CD14-positive monocyte (primary cell): ENCODE measurements at regions of chr17 and their contacts with region 1.

Region 1: DNA sequence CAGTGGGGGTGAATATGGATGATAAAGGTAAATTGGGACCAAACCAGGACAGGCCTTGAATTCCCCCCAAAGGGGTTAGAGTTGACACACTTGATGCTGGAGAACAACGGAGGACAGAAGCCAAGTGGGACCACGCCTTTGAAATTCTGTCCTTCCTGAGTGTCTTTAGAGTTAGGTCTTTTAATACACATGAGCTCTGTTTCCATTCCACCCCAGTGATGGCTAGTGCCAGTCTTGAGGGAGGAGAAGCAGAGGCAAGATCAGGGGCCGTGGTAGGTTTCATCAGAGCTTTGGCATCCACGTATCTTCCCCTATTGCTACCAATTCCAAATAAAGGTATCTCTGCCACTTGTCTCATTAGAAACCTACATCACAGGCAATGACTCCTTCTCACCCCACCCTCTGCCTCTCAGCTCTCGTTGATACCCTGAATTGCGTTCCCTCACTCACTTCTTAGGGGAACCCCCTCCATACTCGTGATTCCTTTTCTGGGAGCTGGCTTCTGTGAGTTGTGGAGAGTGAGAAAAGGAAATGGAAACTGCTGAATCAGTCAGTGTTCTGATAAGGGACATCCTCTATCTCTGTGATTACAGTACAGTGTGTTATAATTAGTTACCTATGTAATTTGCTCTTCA is 2.4 kb upstream of the CCL3L1 start:
- DNase-seq: peak; percentile 87 to 98 (median 96)
- H3K4me3 ChIP-seq: peak overlapping the region in 1 of 3 experiments; percentile 9
- H3K4me3 Mint-ChIP-seq: peak overlapping the region; percentile 5 to 72
- H3K27ac ChIP-seq: peak overlapping the region; percentile 42 to 49
- H3K27ac Mint-ChIP-seq: peak overlapping the region; percentile 88 to 94 (median 90)
- H3K4me1 ChIP-seq: peaks cover 87 to 91% of the 10 kb centered on the region in 2 donors
- H3K4me1 Mint-ChIP-seq: peaks cover 85% of the 10 kb centered on the region
- H3K27me3 ChIP-seq: no peaks in the 10 kb centered on the region
- H3K27me3 Mint-ChIP-seq: peaks cover 1 to 9% (median 3%) of the 10 kb centered on the region in 3 donors
- CTCF ChIP-seq: no peak

Region 2: DNA sequence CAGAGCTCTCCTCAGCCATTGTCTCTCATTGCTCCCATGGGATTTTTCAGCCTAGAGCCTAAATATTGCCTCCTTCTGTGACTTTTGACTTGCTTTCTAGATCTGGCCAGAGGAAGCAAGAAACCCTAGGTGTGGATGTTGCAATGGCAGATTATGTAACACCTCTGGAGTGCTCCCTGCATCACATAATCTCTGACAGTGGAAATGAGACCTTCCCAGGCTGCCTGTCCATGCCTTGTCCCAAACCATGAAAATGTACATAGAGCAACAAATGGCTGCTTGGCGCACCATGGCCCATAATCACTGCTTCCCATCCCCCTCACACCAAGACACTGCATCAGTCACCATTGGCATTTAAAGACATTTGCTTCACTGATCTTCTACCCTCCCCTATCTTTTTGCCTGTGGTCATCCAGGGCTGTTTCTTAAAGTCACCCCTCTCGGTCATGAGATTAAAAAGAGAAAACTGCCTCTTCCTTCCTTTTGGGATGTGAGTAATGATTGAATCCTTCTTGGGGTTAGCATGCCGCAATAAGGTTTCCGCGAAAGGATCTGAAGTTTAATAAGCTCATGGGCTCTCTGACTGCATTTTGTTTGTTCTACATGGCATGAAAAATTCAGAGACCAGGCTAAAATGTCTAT is 1978.1 kb before region 1 on chr17:
- intact Hi-C with region 1: loop called in 1 of 2 experiments (anchors 10 kb)
- DNase-seq: peak; percentile 66 to 86 (median 82)
- H3K4me3 ChIP-seq: peak overlapping the region in 1 of 3 experiments; percentile 26
- H3K4me3 Mint-ChIP-seq: peak overlapping the region; percentile 4 to 47
- H3K27ac ChIP-seq: peak overlapping the region; percentile 35 to 60
- H3K27ac Mint-ChIP-seq: peak overlapping the region; percentile 25 to 95 (median 91)
- H3K4me1 ChIP-seq: peaks cover 60 to 61% of the 10 kb centered on the region in 2 donors
- H3K4me1 Mint-ChIP-seq: peaks cover 66% of the 10 kb centered on the region
- H3K27me3 ChIP-seq: no peaks in the 10 kb centered on the region
- H3K27me3 Mint-ChIP-seq: peaks cover 0 to 3% (median 3%) of the 10 kb centered on the region in 3 donors
- CTCF ChIP-seq: no peak

Region 3: DNA sequence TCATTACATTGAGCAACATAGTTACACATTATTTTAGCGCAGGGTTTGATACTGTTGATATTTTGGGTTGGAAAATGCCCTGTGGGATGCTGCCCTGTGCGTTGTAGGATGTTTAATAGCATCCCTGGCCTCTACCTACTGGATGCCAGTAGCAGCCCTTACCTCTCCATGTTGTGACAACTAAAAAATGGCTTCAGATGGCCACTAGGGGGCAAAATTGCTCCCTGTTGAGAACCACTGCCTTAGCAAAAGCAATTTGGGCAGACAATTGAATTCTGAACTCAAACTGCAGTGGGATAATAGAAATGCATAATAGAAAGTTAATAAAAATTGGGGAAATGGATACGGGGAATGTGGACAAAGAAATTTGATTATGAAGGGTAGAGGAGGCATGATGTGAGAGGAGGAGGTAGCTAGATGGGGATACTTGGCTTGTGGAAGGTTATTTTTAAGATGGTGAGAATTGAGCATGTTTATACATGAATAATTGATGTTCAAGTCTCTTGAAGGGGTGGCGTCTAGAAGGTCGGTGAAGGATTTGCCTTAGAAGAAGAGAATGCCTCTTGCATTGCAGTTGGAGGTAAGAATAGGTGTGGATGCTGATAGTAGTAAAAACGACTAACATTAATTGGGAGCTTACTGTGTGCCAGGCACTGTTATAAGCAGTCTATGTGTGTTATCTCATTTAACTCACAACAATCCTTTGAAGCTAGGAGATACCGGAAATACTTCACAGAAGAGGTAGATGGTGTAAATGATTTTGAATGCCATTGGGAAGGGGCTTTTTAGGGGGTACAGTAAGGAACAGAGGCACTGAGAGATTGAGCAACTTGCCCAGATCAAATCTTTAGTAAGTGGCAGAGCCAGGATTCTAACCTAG is 349.2 kb before region 1 on chr17:
- intact Hi-C with region 1: no loop called
- DNase-seq: peak; percentile 17 to 53 (median 45)
- H3K4me3 ChIP-seq: no peak overlapping the region
- H3K4me3 Mint-ChIP-seq: no peak overlapping the region
- H3K27ac ChIP-seq: no peak overlapping the region
- H3K27ac Mint-ChIP-seq: peak overlapping the region in 1 of 7 donors; percentile 0
- H3K4me1 ChIP-seq: no peaks in the 10 kb centered on the region
- H3K4me1 Mint-ChIP-seq: no peaks in the 10 kb centered on the region
- H3K27me3 ChIP-seq: no peaks in the 10 kb centered on the region
- H3K27me3 Mint-ChIP-seq: peaks cover 0 to 1% (median 0%) of the 10 kb centered on the region in 3 donors
- CTCF ChIP-seq: peak; percentile 86

Region 4: DNA sequence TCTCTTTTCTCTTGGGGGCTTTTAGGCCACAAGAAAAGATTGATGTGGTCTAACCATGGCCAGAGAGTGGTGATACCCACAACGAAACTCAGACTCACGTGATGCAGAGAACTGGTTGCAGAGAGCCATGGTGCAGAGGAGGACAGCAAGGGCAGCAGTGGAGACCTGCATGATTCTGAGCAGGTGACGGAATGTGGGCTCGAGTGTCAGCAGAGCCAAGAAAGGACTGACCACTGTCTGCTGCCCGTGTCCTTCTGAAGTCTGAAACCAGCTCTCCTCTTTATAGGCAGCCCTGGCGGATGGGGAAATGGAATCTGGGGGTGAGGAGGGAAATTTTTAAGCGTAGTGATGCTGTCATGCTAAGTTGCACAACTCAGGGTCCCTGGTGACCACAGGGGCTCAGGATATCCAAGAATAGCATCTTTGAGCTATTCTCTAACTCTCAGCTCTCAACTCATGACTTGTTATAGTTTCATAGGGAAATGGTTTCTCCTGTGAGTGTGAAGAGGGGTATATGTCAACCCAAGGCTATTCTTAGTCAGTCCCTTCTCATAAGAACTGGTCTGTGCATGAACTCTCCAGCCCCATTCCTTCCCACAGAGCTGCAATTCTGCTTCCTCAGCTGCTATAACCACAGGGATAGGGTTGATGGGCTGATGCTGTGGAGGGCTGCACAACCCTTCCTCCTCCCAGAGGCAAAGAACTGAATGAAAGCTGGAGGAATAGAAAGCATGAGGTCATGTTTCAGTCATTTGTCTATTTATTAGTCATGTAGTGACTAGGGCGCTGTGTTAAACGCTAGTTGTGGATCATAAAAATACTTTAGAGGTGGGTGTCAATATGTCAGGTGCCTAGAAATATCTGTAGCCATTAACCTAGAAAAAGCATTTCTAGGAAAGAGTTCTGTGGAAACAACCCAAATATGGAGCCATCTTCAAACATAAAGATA is 108.8 kb before region 1 on chr17 and contains the start of gene CCL3:
- intact Hi-C with region 1: loop called in 1 of 2 experiments (anchors 10 kb)
- DNase-seq: peak; percentile 89 to 99 (median 89)
- H3K4me3 ChIP-seq: peak within 1 kb of the TSS in 1 of 3 experiments; percentile 47
- H3K4me3 Mint-ChIP-seq: peak within 1 kb of the TSS; percentile 73 to 80
- H3K27ac ChIP-seq: peak within 1 kb of the TSS; percentile 78 to 79
- H3K27ac Mint-ChIP-seq: peak within 1 kb of the TSS; percentile 94 to 99 (median 97)
- H3K4me1 ChIP-seq: peaks cover 45 to 60% of the 10 kb centered on the region in 2 donors
- H3K4me1 Mint-ChIP-seq: peaks cover 58% of the 10 kb centered on the region
- H3K27me3 ChIP-seq: no peaks in the 10 kb centered on the region
- H3K27me3 Mint-ChIP-seq: peaks cover 2 to 18% (median 4%) of the 10 kb centered on the region in 3 donors
- CTCF ChIP-seq: no peak
- polyA plus RNA-seq, gene CCL3: 161 to 328 (median 190) TPM

Region 5: GRCh38 chr17:36148559-36149295 is 50.2 kb before region 1 on chr17:
- intact Hi-C with region 1: no loop called
- DNase-seq: peak; percentile 59 to 80 (median 74)
- H3K4me3 ChIP-seq: peak overlapping the region in 1 of 3 experiments; percentile 40
- H3K4me3 Mint-ChIP-seq: peak overlapping the region; percentile 17 to 63
- H3K27ac ChIP-seq: no peak overlapping the region
- H3K27ac Mint-ChIP-seq: no peak overlapping the region
- H3K4me1 ChIP-seq: peaks cover 8 to 10% of the 10 kb centered on the region in 2 donors
- H3K4me1 Mint-ChIP-seq: peaks cover 9% of the 10 kb centered on the region
- H3K27me3 ChIP-seq: no peaks in the 10 kb centered on the region
- H3K27me3 Mint-ChIP-seq: peaks cover 0 to 6% (median 2%) of the 10 kb centered on the region in 3 donors
- CTCF ChIP-seq: peak; percentile 99

Region 6: GRCh38 chr17:36183001-36183971 is 15.7 kb before region 1 on chr17:
- intact Hi-C with region 1: loop called in 1 of 2 experiments (anchors 1 kb)
- DNase-seq: peak in 2 of 3 donors; percentile 64 to 72
- H3K4me3 ChIP-seq: peak overlapping the region; percentile 41 to 76 (median 47)
- H3K4me3 Mint-ChIP-seq: peak overlapping the region; percentile 80 to 94
- H3K27ac ChIP-seq: peak overlapping the region; percentile 49 to 83
- H3K27ac Mint-ChIP-seq: peak overlapping the region in 5 of 7 donors; percentile 48 to 93 (median 84)
- H3K4me1 ChIP-seq: peaks cover 48 to 53% of the 10 kb centered on the region in 2 donors
- H3K4me1 Mint-ChIP-seq: peaks cover 54% of the 10 kb centered on the region
- H3K27me3 ChIP-seq: peaks cover 0 to 6% of the 10 kb centered on the region in 2 donors
- H3K27me3 Mint-ChIP-seq: peaks cover 11 to 15% (median 15%) of the 10 kb centered on the region in 3 donors
- CTCF ChIP-seq: no peak

Region 7: DNA sequence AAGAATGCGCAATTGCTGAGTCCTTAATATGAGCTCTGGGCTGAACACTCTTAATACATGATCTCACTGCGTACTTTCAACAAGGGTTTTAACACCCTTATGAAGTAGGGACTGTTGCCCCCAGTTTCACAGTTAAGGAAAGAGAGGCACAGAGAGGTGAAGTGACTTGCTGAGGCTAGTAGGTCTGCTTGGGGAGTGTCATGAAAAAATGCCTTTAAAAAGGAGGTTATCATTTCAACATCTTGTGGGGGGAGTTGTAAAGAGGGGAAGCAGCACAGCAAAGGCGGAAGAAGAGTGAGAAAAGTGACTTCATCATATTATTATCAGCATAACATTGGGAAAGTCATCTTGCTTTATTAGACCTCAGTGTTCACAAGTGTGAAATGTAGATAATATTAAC is 14.0 kb after region 1 on chr17:
- intact Hi-C with region 1: loop called (anchors 2 kb)
- DNase-seq: peak; percentile 54 to 91 (median 70)
- H3K4me3 ChIP-seq: peak overlapping the region in 1 of 3 experiments; percentile 39
- H3K4me3 Mint-ChIP-seq: peak overlapping the region in 1 of 2 donors; percentile 49
- H3K27ac ChIP-seq: peak overlapping the region in 1 of 2 donors; percentile 71
- H3K27ac Mint-ChIP-seq: peak overlapping the region; percentile 24 to 98 (median 94)
- H3K4me1 ChIP-seq: peaks cover 66 to 67% of the 10 kb centered on the region in 2 donors
- H3K4me1 Mint-ChIP-seq: peaks cover 66% of the 10 kb centered on the region
- H3K27me3 ChIP-seq: no peaks in the 10 kb centered on the region
- H3K27me3 Mint-ChIP-seq: peaks cover 0 to 6% (median 3%) of the 10 kb centered on the region in 3 donors
- CTCF ChIP-seq: no peak